ENCODE measurements at regions of chr11 and their contacts with region 1.

Region 1: DNA sequence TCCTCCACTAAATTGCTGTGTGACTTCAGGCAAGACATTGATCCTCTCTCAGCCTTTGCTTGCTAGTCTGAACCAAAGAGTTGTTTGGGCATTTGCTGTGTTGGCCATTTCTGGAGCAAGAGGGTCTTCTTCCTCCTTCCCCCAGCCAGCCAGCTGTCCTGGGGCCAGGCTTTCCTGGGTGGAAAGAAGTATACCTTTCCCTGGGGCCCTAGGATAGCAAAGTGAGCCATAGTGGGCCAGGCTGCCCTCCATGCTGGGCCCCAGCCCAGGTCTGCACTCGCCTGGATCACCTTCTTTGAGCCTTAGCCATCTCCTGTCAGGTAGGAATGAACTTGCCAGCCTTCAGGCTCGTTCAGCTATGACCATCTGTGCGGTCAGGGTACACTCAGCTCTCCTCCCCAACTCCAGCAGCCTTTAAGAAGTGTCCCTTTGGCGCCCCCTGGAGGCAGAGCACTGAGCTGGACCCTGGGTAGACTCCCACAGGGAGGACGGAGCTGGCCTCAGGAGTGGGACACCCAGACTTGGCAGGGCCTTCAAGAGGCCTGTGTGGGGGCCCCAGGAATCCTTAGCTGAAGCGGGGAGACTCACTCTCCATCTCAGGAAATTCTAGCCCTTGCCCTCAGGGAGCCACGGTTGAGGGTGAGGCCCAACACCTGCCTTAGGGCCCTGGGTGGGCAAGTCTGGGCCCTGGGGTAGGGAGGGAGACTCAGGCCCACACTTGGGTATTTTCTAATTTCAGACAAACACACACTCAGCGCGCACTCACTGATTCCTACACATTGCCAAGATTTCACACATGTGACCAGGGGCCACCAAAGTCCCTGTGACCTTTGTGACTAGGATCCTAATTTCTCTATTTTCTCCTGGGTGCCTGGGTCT is 35.6 kb upstream of the TPBGL start:
- DNase-seq: peak; percentile 49
- H3K4me3 ChIP-seq: no peak overlapping the region
- H3K27ac ChIP-seq: no peak overlapping the region
- H3K4me1 ChIP-seq: no peaks in the 10 kb centered on the region
- H3K27me3 ChIP-seq: peaks cover 27% of the 10 kb centered on the region
- CTCF ChIP-seq: peak; percentile 88 to 93 (median 89)

Region 2: DNA sequence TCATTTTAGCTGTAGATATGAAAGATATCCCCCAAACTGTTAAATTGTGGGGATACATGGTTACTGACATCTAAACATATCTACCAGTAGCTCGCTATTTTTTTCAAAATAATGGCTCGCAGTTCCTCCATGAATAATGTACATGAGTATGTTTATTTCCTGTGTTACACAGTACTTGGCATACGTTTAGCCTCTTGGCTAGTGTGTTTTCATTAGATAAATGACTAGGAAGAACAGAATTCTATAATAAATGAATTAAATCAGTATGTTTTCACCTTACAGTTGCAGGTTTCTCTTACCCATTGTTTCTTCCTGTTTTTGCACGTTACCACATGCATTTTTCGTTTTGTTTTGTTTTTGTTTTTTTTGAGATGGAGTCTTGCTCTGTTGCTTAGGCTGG is 434.5 kb before region 1 on chr11:
- dilution Hi-C with region 1: no loop called
- DNase-seq: no peak
- H3K4me3 ChIP-seq: no peak overlapping the region
- H3K27ac ChIP-seq: no peak overlapping the region
- H3K4me1 ChIP-seq: peaks cover 13% of the 10 kb centered on the region
- H3K27me3 ChIP-seq: no peaks in the 10 kb centered on the region
- CTCF ChIP-seq: no peak

Region 3: DNA sequence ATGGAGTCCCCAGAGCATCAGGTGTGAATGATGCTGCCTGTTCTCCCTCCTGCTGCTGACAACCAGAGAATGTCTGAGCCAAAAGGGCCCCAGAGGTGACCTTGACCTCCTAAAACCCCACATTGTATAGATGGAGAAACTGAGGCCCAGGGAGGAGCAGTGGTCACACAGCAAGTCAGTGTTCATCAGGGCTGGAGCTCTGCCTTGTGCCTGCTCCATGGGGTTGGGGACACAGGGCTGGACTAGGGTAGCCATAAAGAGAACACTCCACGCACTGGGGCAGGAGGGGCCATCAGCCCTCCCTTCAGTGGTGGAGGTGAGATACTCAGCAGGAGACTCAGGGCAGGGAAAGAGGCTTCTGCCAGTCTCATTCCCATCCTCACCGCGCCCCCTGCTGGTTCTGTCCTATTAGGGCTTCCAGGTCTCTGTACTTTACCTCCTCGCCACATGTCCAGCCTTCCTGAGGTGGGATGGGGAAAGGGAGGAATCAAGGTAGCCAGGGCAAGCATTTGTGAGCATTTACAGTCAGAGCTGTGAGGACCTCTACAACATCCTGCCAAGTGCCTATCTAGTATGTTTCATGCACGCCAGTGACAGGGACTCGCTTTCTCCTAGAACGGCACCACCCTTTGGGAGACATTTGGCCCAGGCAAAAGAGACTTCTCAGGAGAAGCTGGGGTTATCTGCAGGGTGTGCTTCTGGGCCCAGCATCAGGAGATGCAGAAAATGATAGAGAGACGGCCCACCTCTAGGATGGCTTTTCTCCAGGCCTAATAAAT is 173.0 kb before region 1 on chr11:
- dilution Hi-C with region 1: loop called (anchors 25 kb)
- DNase-seq: no peak
- H3K4me3 ChIP-seq: no peak overlapping the region
- H3K27ac ChIP-seq: no peak overlapping the region
- H3K4me1 ChIP-seq: peaks cover 4% of the 10 kb centered on the region
- H3K27me3 ChIP-seq: no peaks in the 10 kb centered on the region
- CTCF ChIP-seq: peak; percentile 92

Region 4: DNA sequence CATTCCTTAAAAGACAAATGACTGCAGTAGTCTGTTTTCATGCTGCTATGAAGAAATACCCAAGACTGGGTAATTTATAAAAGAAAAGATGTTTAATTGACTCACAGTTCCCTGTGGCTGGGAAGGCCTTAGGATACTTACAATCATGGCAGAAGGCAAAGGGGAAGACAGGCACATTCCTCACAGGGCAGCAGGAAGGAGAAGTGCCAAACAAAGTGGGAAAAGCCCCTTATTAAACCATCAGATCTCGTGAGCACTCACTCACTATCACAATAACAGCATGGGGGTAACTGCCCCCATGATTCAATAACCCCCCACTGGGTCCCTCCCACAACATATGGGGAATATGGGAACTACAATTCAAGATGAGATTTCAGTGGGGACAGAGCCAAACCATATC is 91.9 kb before region 1 on chr11:
- dilution Hi-C with region 1: no loop called
- DNase-seq: no peak
- H3K4me3 ChIP-seq: no peak overlapping the region
- H3K27ac ChIP-seq: no peak overlapping the region
- H3K4me1 ChIP-seq: no peaks in the 10 kb centered on the region
- H3K27me3 ChIP-seq: no peaks in the 10 kb centered on the region
- CTCF ChIP-seq: no peak